Activated T-helper 2 cell treated with anti-CD3 and anti-CD28 coated beads, Interferon-gamma antibody, Interleukin-2, Interleukin-4, amounts not matched to agents 10 μg/mL and 5 μg/mL and 100 μg/mL, durations not matched to agents 14 hours and 24 hours and 36 hours (primary cell): ENCODE measurements at regions of chr12 and their contacts with region 1.

Region 1: GRCh38 chr12:4143896-4144295 is 129.7 kb upstream of the CCND2 start:
- DNase-seq: no peak
- H3K4me3 Mint-ChIP-seq: no peak overlapping the region
- H3K27ac Mint-ChIP-seq: peak overlapping the region; percentile 64
- H3K4me1 Mint-ChIP-seq: peaks cover 95% of the 10 kb centered on the region
- H3K27me3 Mint-ChIP-seq: no peaks in the 10 kb centered on the region

Region 2: GRCh38 chr12:3872800-3873636 is 270.9 kb before region 1 on chr12 and contains the start of gene PARP11:
- intact Hi-C with region 1: loop called (anchors 5 kb)
- DNase-seq: peak; percentile 97
- H3K4me3 Mint-ChIP-seq: peak within 1 kb of the TSS; percentile 98
- H3K27ac Mint-ChIP-seq: peak within 1 kb of the TSS; percentile 97
- H3K4me1 Mint-ChIP-seq: peaks cover 43% of the 10 kb centered on the region
- H3K27me3 Mint-ChIP-seq: no peaks in the 10 kb centered on the region
- total RNA-seq, gene PARP11: 15.3 and 16.0 TPM in 2 replicates

Region 3: DNA sequence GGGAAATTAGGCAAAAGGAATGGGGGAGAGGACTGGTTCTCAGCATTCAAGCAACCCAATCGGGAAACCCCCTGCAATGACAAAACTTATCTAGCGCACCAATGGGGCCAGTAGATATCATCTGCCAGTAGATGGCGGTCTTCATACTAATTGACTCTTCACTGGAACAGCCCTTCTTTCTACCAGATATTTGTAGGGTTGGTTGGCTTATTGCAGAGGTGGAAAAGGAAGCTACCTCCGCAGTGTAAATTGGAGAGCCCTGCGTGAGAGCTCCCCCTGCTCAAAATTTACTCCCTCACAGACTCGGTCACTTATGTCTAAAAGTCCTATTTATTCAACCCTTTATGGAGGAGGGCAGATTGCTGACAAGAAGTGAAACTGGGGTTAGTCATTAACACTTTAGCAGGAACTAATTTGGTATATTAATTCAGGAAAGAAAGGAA is 36.4 kb before region 1 on chr12:
- intact Hi-C with region 1: loop called (anchors 1 kb)
- DNase-seq: peak; percentile 75
- H3K4me3 Mint-ChIP-seq: peak overlapping the region; percentile 10
- H3K27ac Mint-ChIP-seq: peak overlapping the region; percentile 73
- H3K4me1 Mint-ChIP-seq: peaks cover 53% of the 10 kb centered on the region
- H3K27me3 Mint-ChIP-seq: peaks cover 4% of the 10 kb centered on the region

Region 4: DNA sequence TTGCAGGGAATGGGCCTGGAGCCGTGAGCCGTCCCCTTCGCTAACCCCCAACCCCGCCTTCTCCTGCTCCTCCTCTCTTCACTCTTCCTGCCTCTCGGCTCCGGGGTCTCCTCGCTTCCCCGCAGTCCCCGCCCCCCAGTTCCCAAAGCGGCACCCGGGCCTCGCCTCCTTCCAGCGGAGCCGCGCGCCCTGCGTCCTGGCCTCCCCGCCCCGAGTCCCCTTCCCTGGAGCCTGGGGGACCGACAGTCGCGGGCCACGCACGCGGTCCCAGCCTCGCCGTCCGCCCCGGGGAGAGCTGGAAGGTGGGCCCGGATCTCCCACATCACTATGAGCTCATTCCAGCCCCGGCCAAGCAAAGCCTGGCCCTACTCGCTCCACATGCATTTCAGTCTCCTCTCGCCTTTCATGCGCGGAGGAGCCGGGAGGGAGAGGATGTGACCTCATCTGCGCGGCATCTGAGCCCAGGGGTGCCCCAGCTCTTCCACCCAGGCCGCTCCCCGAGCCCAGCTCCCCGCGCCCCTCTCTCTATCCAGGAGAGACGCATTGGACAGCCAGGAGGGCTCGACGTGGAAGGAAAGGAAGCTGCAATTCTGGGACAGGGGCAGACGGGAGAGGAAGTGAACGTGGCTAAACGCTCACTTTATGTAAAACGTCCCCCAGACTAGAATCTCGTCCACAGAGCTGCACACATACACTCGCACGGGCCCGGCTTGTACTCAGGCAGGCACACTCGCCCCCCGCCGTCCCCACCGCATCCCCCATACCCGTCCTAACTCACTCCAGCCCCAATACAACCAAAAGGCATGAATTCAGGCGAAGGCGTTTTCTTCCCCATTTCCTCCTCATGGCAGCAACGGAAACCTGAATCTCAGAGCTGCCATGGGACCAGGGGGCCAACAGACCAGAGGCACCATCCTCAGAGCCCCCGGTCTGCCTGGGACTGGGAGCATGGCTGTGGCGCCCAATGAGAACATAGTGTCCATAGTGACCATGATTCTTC is 21.0 kb after region 1 on chr12:
- intact Hi-C with region 1: loop called (anchors 1 kb)
- DNase-seq: peak; percentile 64
- H3K4me3 Mint-ChIP-seq: peak overlapping the region; percentile 84
- H3K27ac Mint-ChIP-seq: peak overlapping the region; percentile 95
- H3K4me1 Mint-ChIP-seq: peaks cover 68% of the 10 kb centered on the region
- H3K27me3 Mint-ChIP-seq: no peaks in the 10 kb centered on the region

Region 5: GRCh38 chr12:4215229-4216186 is 71.6 kb after region 1 on chr12:
- intact Hi-C with region 1: loop called (anchors 1 kb)
- DNase-seq: peak; percentile 22
- H3K4me3 Mint-ChIP-seq: peak overlapping the region; percentile 46
- H3K27ac Mint-ChIP-seq: peak overlapping the region; percentile 70
- H3K4me1 Mint-ChIP-seq: peaks cover 46% of the 10 kb centered on the region
- H3K27me3 Mint-ChIP-seq: peaks cover 2% of the 10 kb centered on the region